Psoas muscle (tissue), 8 donors: ENCODE measurements at regions of chr16 and their contacts with region 1.

Region 1: DNA sequence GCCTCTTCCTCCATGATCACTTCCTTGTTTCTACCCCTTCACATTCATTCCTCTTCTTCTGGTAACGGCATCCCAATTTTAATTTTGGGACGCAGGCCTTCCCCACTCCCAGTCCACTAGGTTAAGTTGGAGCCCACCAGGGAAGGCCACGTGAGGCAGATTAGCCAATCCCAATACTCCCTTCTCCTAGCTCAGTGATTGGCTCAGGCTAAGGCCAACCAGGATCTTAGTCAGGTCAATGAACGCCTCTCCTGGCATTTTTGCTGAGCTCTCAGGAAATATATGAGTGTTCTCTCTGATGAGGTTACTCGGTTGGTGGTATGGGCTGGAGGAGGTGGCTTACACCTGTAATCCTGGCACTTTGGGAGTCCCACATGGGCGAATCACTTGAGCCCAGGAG is 15.4 kb downstream of the SEZ6L2 start:
- DNase-seq: no peak
- ATAC-seq: no peak
- H3K4me3 ChIP-seq: no peak overlapping the region
- H3K27ac ChIP-seq: no peak overlapping the region
- H3K4me1 ChIP-seq: no peaks in the 10 kb centered on the region
- H3K27me3 ChIP-seq: peaks cover 0 to 9% (median 3%) of the 10 kb centered on the region in 3 donors
- CTCF ChIP-seq: no peak

Region 2: DNA sequence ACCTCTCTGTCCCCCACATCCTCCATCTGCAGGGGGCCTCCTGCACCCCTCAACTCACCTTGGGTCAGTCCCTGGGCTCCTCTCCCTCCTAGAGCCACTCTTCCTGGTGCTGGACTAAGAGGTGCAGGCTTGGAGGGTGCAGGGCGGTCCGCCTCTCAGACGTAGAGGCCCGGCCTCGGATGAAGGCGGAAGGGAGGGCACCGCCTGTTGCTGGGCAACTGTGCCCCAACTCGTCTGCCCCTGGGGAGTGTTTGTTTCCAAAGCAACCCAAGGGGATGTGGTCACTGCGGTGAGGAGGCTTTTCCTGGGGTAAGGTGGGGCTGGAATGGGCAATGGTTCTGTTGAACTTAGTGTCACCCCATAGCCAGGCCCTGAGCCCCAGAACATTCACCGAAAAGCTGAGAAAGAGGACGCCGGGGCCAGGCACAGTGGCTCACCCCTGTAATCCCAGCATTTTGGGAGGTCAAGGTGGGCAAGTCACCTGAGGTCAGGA is 138.1 kb before region 1 on chr16 and contains the start of gene C16orf54:
- intact Hi-C with region 1: loop called in 1 of 2 experiments (anchors 10 kb)
- DNase-seq: peak; percentile 54 to 80
- ATAC-seq: peak; percentile 15 to 56 (median 44)
- H3K4me3 ChIP-seq: peak within 1 kb of the TSS; percentile 32
- H3K27ac ChIP-seq: no peak within 1 kb of the TSS
- H3K4me1 ChIP-seq: no peaks in the 10 kb centered on the region
- H3K27me3 ChIP-seq: no peaks in the 10 kb centered on the region
- CTCF ChIP-seq: no peak
- total RNA-seq, gene C16orf54: 0.24 to 0.57 (median 0.46) TPM